Activated naive CD4-positive, alpha-beta T cell treated with anti-CD3 and anti-CD28 coated beads for 36 hours (primary cell): ENCODE measurements at regions of chr15 and their contacts with region 1.

Region 1: GRCh38 chr15:22838292-22839042 is at the start of gene NIPA2:
- DNase-seq: peak; percentile 97
- H3K4me3 Mint-ChIP-seq: peak within 1 kb of the TSS; percentile 95
- H3K27ac Mint-ChIP-seq: peak within 1 kb of the TSS; percentile 90
- H3K4me1 Mint-ChIP-seq: peaks cover 24% of the 10 kb centered on the region
- H3K27me3 Mint-ChIP-seq: no peaks in the 10 kb centered on the region
- total RNA-seq, gene NIPA2: 47.0 to 47.9 TPM

Region 2: GRCh38 chr15:22735781-22736180 is 102.7 kb before region 1 on chr15:
- CTCF ChIA-PET with region 1: no interaction called
- intact Hi-C with region 1: loop called (anchors 10 kb)
- DNase-seq: no peak
- H3K4me3 Mint-ChIP-seq: no peak overlapping the region
- H3K27ac Mint-ChIP-seq: no peak overlapping the region
- H3K4me1 Mint-ChIP-seq: peaks cover 13% of the 10 kb centered on the region
- H3K27me3 Mint-ChIP-seq: peaks cover 10% of the 10 kb centered on the region

Region 3: DNA sequence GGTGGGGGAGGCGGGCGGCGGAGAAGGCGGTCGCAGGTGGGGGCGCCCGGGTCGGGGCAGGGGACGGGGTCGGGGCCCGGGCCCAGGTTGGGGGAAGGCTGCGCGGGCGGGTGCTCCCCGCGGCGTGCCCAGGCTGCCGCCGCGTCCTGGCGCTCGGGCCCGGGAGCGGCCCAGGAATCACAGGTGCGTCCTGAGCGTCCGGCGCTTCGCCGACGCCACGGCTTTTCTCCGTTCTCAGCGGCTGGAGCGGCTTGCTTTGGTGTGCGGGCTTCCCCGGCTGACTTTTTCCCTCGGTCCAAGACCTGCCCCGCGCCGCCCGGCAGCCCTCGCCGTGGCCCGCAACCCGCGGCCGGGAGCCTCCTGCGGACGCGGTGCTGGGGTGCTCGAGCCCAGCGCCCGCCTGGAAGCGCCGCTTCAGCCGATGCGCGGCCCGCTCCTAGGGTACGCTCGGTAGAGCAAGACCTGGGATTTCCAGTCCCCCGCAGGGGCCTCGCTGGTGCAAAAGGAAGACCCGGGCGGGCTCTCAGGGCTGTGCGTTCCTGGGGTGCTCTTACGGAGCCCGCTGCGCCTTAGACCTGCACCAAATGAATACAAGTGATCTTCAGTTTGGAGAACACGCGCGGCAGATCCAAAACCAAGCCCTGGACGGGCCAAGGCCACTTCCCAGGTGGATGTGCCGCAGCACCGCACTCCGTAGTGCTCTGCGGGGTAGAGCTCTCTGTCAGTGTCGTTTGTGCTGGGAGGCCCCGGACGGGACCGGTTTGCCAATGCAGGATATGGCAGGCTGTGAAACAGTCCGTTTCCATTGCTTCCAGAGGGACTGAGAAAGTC is 51.4 kb before region 1 on chr15:
- CTCF ChIA-PET with region 1: no interaction called
- intact Hi-C with region 1: loop called (anchors 2 kb)
- DNase-seq: peak; percentile 15
- H3K4me3 Mint-ChIP-seq: peak overlapping the region; percentile 71
- H3K27ac Mint-ChIP-seq: no peak overlapping the region
- H3K4me1 Mint-ChIP-seq: peaks cover 9% of the 10 kb centered on the region
- H3K27me3 Mint-ChIP-seq: no peaks in the 10 kb centered on the region

Region 4: DNA sequence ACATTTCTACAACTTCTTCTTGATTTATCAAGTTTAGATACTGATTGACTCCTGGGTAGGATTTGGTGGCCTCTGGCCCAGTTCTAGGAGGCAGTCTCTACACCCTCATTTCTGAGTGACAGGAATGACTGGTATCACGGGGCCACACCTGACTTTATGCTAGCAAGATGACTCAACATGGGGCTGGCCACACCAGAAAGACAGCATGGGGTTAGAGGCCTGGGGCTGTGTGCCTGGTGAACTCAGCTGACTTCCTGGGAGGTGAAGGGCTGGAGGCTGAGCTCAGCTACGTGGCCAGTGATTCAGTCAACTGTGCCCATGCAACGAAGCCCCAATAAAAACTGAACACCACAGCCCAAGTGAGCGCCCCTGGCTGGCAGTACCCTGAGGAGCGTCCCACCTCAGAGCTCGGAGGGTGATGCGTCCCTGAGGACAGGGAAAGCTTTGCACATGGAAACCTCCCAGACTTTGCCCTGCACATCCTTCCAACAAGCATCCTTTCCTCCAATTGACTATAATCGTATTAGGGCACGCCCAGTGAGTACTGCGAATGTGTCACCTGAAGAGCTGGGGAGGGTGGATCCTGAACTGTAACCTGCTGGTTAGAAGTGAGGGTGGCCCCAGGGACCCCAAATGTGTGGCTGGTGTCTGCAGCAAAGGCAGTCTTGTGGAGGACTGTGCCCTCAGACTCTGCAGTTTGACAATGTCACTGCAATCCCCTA is 57.2 kb after region 1 on chr15:
- CTCF ChIA-PET with region 1: no interaction called
- intact Hi-C with region 1: loop called (anchors 5 kb)
- DNase-seq: peak; percentile 44
- H3K4me3 Mint-ChIP-seq: no peak overlapping the region
- H3K27ac Mint-ChIP-seq: no peak overlapping the region
- H3K4me1 Mint-ChIP-seq: peaks cover 3% of the 10 kb centered on the region
- H3K27me3 Mint-ChIP-seq: no peaks in the 10 kb centered on the region

Region 5: DNA sequence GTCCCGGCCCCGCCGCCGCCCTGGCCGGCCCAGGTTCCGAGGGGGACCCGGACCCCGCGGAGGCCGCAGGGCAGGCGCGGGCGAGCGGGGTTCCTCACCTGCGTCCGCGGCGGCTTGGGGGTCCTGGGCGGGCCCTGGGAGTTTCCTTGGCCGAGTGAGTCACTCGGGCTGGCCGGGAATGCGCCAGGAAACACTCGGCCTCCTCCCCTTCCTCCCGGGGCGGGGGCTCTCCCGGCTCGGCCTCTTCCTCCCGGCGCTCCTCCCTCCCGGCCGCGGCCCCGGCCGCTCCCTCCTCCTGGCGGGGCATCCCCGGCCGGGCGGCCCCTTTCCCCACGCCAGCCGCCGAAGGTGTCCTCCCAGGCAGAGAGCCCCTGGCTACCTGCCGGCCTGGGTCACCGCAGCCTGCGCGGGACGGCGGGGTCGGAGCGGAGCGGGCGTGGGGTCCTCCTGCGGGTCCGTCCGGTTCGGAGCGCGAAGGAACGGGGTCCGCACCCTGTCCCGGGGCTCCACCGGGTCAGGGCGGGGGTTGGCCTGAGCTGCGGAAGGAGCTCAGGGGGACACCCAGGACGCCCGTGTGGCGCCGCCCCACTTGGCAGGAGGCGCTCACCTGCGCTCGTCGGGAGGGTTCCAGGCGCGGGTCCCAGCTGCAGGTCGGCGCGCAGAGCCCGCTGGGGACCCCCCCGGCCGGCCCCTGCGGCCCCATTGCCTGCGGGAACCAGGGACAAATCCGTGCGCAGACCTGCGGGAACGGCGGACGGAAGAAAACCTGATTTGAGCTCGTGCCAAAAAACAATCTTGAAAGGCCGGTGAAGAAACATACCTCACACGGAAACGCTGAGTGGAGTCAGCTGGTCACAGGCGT is 142.0 kb after region 1 on chr15 and contains the start of gene CYFIP1:
- CTCF ChIA-PET with region 1: no interaction called
- intact Hi-C with region 1: loop called (anchors 5 kb)
- DNase-seq: peak; percentile 52
- H3K4me3 Mint-ChIP-seq: peak within 1 kb of the TSS; percentile 91
- H3K27ac Mint-ChIP-seq: no peak within 1 kb of the TSS
- H3K4me1 Mint-ChIP-seq: peaks cover 6% of the 10 kb centered on the region
- H3K27me3 Mint-ChIP-seq: peaks cover 20% of the 10 kb centered on the region
- total RNA-seq, gene CYFIP1: 34.0 to 35.1 TPM